ENCODE measurements at regions of chr10 and their contacts with region 1.

Region 1: GRCh38 chr10:87771871-87772500 is 46.0 kb downstream of the ATAD1 start:
- DNase-seq: no peak
- H3K4me3 ChIP-seq: no peak overlapping the region
- H3K27ac ChIP-seq: no peak overlapping the region
- H3K4me1 ChIP-seq: no peaks in the 10 kb centered on the region
- H3K27me3 ChIP-seq: no peaks in the 10 kb centered on the region
- CTCF ChIP-seq: peak; percentile 42 to 58 (median 48)
- POLR2A ChIP-seq: no peak

Region 2: DNA sequence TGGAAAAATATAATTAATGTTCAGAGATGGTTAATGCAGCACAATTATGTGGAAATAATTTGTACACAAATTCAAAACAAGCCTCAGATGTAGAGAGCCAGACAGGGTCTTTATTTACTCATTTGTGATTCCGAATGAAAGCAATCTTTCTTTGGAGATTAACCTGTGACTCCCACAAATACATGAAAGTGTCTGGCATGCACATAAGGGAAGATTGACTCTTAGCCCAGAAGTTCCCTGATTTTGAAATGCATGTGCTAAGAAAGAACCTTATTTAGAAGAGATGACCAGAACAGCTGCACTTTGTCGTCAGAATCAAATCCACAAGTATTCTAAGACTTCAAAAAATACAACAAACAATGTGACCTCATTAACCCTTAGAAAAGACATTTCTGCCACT is 766.1 kb after region 1 on chr10:
- intact Hi-C with region 1: loop called (anchors 10 kb)
- DNase-seq: no peak
- H3K4me3 ChIP-seq: no peak overlapping the region
- H3K27ac ChIP-seq: peak overlapping the region; percentile 16 to 46
- H3K4me1 ChIP-seq: no peaks in the 10 kb centered on the region
- H3K27me3 ChIP-seq: no peaks in the 10 kb centered on the region
- CTCF ChIP-seq: no peak
- POLR2A ChIP-seq: no peak

Measured in breast epithelium (tissue), 4 donors.